Activated B cell treated with CpG ODN at 0.5 μM for 24 hours (primary cell): ENCODE measurements at regions of chr10 and their contacts with region 1.

Region 1: GRCh38 chr10:110414563-110415309 is 83.0 kb upstream of the DUSP5 start:
- DNase-seq: peak; percentile 72
- ATAC-seq: peak; percentile 89
- H3K4me3 Mint-ChIP-seq: peak overlapping the region; percentile 50
- H3K27ac Mint-ChIP-seq: peak overlapping the region; percentile 65
- H3K4me1 Mint-ChIP-seq: peaks cover 71% of the 10 kb centered on the region
- H3K27me3 Mint-ChIP-seq: peaks cover 6% of the 10 kb centered on the region
- CTCF ChIP-seq: no peak

Region 2: DNA sequence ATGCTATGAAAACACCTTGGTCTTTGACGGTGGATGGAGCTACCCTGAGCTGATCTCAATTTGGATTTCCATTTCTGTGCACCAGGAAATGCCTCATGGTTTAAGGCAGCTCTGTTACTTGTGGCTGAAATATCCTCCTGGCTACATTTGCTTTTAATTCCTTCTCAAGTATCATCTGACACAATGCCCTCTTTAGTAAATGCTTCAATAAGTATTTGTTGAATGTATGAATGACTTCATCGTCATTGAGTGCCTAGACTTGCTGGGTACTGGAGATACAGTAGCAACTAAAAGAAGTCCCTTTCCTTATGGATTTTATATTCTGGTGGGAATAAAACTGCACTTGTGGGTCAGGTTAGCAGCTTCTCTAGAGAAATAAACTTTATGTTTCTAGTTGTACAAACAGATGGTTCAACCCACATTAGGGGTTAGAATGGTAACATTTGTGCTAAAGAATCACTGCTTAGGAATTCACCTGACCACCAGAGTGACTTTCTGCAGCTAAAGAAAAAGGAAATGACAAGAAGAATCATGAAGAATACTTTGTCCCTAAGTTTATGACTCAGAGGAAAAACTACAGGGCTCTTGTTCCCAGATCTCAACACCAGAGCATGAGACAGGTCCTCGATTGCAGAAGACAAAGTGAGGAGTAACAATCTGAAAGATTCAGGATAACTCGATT is 88.2 kb before region 1 on chr10:
- CTCF ChIA-PET with region 1: interaction called, 5 read pairs
- POLR2A ChIA-PET with region 1: interaction called, 50 read pairs
- intact Hi-C with region 1: loop called (anchors 1 kb)
- DNase-seq: no peak
- ATAC-seq: peak; percentile 8
- H3K4me3 Mint-ChIP-seq: peak overlapping the region; percentile 4
- H3K27ac Mint-ChIP-seq: peak overlapping the region; percentile 92
- H3K4me1 Mint-ChIP-seq: peaks cover 49% of the 10 kb centered on the region
- H3K27me3 Mint-ChIP-seq: no peaks in the 10 kb centered on the region
- CTCF ChIP-seq: no peak

Region 3: GRCh38 chr10:110368002-110368401 is 46.7 kb before region 1 on chr10:
- CTCF ChIA-PET with region 1: interaction called, 5 read pairs
- POLR2A ChIA-PET with region 1: interaction called, 15 read pairs
- intact Hi-C with region 1: no loop called
- DNase-seq: no peak
- ATAC-seq: peak; percentile 71
- H3K4me3 Mint-ChIP-seq: peak overlapping the region; percentile 50
- H3K27ac Mint-ChIP-seq: peak overlapping the region; percentile 77
- H3K4me1 Mint-ChIP-seq: peaks cover 42% of the 10 kb centered on the region
- H3K27me3 Mint-ChIP-seq: no peaks in the 10 kb centered on the region
- CTCF ChIP-seq: no peak

Region 4: GRCh38 chr10:110460111-110460809 is 45.5 kb after region 1 on chr10:
- CTCF ChIA-PET with region 1: no interaction called
- POLR2A ChIA-PET with region 1: interaction called, 13 read pairs
- intact Hi-C with region 1: loop called (anchors 1 kb)
- DNase-seq: peak; percentile 40
- ATAC-seq: peak; percentile 68
- H3K4me3 Mint-ChIP-seq: peak overlapping the region; percentile 38
- H3K27ac Mint-ChIP-seq: peak overlapping the region; percentile 71
- H3K4me1 Mint-ChIP-seq: peaks cover 75% of the 10 kb centered on the region
- H3K27me3 Mint-ChIP-seq: no peaks in the 10 kb centered on the region
- CTCF ChIP-seq: no peak

Region 5: DNA sequence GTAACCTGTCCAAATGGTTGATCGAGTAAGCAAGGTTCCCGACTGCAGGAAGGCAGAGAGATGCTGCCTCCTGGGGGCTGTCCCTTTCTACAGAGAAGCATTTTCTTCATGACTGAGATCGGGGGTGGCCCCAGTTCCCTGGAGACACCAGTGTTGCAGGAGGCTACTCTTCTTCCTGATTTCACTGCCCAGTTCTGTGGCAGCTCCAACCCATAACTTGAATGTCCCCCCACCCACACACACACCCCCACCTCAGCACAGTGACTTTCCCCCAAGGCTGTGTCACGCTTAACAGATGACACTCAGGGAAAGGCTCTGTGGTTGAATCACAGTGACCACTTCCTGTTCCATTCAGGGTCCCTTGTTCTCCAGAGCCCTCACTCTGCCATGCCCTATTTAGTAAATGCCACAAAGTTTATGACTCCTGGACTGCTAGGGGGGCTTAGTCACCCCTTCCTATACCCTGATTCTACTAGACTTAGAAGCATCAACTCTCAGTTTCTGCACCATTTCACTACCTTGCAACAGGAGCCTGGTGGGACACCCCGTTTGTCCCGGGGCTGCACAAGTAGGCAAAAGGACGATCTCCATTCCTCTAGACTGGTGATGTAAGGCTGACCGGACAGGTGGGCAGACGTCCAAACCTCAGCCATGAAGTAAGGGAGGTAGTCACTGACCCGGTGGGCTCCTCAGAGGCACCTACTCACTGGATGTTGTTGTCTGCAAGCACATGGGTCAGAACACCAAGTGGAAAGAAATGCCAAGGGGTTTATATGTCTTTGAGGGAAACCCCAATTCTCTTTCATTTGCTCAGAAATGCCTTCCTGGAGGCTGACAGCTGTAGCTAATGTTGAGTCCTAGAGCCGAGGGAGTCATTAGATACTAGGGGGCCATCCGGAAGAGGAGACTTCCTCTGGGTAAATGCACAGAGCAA is 121.5 kb after region 1 on chr10:
- CTCF ChIA-PET with region 1: no interaction called
- POLR2A ChIA-PET with region 1: interaction called, 10 read pairs
- intact Hi-C with region 1: loop called (anchors 1 kb)
- DNase-seq: peak; percentile 49
- ATAC-seq: peak; percentile 83
- H3K4me3 Mint-ChIP-seq: peak overlapping the region; percentile 62
- H3K27ac Mint-ChIP-seq: peak overlapping the region; percentile 68
- H3K4me1 Mint-ChIP-seq: peaks cover 31% of the 10 kb centered on the region
- H3K27me3 Mint-ChIP-seq: peaks cover 4% of the 10 kb centered on the region
- CTCF ChIP-seq: no peak

Region 6: DNA sequence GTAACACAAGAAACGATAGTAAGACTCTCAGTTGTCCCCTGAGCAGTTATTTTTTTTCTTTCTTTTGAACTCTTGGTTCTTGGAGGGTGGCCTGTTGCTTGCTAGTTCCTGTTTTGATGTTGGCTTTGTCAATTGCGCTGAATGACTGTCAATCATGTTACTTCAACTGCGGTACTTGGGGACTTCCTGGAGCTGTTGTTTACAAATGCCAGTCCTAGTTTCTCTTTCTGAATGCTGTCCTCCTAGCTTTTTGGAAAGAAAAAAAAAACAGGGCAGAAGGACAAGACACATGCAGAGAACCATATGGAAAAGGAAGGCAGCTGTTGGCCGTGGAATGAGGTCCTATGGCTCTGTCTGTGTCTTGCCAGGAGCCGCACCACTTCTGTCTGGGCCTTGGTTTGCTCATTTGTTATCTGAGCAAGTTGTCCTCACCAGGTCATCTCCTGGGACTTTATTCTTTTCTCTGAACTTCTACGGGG is 450.0 kb after region 1 on chr10:
- CTCF ChIA-PET with region 1: no interaction called
- POLR2A ChIA-PET with region 1: no interaction called
- intact Hi-C with region 1: loop called (anchors 10 kb)
- DNase-seq: no peak
- ATAC-seq: peak; percentile 50
- H3K4me3 Mint-ChIP-seq: peak overlapping the region; percentile 79
- H3K27ac Mint-ChIP-seq: peak overlapping the region; percentile 97
- H3K4me1 Mint-ChIP-seq: peaks cover 98% of the 10 kb centered on the region
- H3K27me3 Mint-ChIP-seq: no peaks in the 10 kb centered on the region
- CTCF ChIP-seq: no peak